ENCODE measurements at regions of chr2 and their contacts with region 1.

Region 1: GRCh38 chr2:70907130-70908057 is 28.3 kb upstream of the ATP6V1B1 start:
- DNase-seq: no peak
- H3K4me3 Mint-ChIP-seq: peak overlapping the region; percentile 25
- H3K27ac Mint-ChIP-seq: no peak overlapping the region
- H3K4me1 Mint-ChIP-seq: peaks cover 9% of the 10 kb centered on the region
- H3K27me3 Mint-ChIP-seq: peaks cover 64% of the 10 kb centered on the region

Region 2: GRCh38 chr2:70248181-70248847 is 659.1 kb before region 1 on chr2 and contains the start of gene TIA1:
- CTCF ChIA-PET with region 1: no interaction called
- POLR2A ChIA-PET with region 1: no interaction called
- intact Hi-C with region 1: no loop called
- DNase-seq: peak; percentile 99
- H3K4me3 Mint-ChIP-seq: peak within 1 kb of the TSS; percentile 90
- H3K27ac Mint-ChIP-seq: peak within 1 kb of the TSS; percentile 96
- H3K4me1 Mint-ChIP-seq: peaks cover 28% of the 10 kb centered on the region
- H3K27me3 Mint-ChIP-seq: peaks cover 4% of the 10 kb centered on the region
- total RNA-seq, gene TIA1: 82.5 to 98.6 TPM

Region 3: GRCh38 chr2:70887550-70888246 is 19.7 kb before region 1 on chr2:
- CTCF ChIA-PET with region 1: no interaction called
- POLR2A ChIA-PET with region 1: no interaction called
- intact Hi-C with region 1: loop called (anchors 2 kb)
- DNase-seq: peak; percentile 62
- H3K4me3 Mint-ChIP-seq: peak overlapping the region; percentile 57
- H3K27ac Mint-ChIP-seq: no peak overlapping the region
- H3K4me1 Mint-ChIP-seq: peaks cover 26% of the 10 kb centered on the region
- H3K27me3 Mint-ChIP-seq: peaks cover 80% of the 10 kb centered on the region

Region 4: DNA sequence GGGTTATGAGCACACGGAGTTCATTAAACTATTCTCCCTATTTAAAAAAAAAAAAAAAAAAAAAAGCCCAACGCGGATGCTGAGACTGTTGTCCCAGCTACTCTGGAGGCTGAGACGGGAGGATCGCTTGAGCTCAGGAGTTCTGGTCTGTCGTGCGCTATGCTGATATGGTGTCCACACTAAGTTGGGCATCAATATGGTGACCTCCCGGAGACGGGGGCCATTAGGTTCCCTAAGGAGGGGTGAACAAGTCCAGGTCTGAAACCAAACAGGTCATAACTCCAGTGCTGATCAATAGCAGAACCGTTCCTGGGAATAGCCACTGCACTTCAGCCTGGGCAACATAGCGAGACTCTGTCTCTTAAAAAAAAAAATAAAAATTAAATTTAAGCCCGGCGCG is 58.1 kb after region 1 on chr2:
- CTCF ChIA-PET with region 1: no interaction called
- POLR2A ChIA-PET with region 1: no interaction called
- intact Hi-C with region 1: no loop called
- DNase-seq: no peak
- H3K4me3 Mint-ChIP-seq: peak overlapping the region; percentile 76
- H3K27ac Mint-ChIP-seq: no peak overlapping the region
- H3K4me1 Mint-ChIP-seq: peaks cover 3% of the 10 kb centered on the region
- H3K27me3 Mint-ChIP-seq: peaks cover 16% of the 10 kb centered on the region